Activated CD4-positive, alpha-beta memory T cell treated with anti-CD3 and anti-CD28 coated beads for 36 hours (primary cell): ENCODE measurements at regions of chr12 and their contacts with region 1.

Region 1: DNA sequence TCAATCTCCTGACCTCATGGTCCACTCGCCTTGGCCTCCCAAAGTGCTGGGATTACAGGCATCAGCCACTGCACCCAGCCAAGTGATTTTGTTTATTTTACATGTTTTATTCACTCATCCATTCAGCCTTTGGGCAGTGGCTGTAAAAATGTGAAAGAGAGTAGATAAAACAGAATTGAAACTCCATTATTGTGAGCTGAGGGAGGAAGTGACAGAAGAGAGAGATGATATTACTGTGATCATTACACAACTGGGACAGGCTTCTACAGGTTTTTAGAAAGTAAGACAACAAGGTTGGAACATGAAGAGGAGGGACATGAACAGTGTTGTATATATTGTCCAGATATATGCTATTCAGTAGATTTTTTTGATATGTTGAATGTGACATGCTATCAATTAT is 25.0 kb downstream of the CREBL2 start:
- DNase-seq: no peak
- H3K4me3 Mint-ChIP-seq: no peak overlapping the region
- H3K27ac Mint-ChIP-seq: no peak overlapping the region
- H3K4me1 Mint-ChIP-seq: peaks cover 16% of the 10 kb centered on the region
- H3K27me3 Mint-ChIP-seq: no peaks in the 10 kb centered on the region

Region 2: DNA sequence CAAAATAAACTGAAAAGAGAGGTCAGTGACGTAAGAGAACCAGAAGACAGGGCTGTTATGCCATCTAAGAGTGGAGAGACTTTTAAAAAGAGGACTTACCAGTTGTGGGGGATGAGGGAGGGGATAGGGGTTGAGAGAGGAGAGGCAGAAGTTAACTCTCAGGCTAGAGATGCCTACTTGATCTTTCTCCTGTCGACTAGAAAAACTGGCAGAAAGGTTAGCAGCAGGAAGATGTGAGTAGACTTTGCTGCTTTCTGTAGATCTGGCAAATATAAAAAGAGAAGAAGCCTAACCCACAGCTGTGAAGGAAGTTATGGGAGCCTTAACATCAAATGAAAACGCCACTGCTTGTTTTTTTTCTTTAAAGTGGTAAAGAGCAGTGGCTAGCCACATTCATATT is 14.2 kb before region 1 on chr12:
- CTCF ChIA-PET with region 1: interaction called, 3 read pairs
- POLR2A ChIA-PET with region 1: no interaction called
- intact Hi-C with region 1: loop called (anchors 1 kb)
- DNase-seq: no peak
- H3K4me3 Mint-ChIP-seq: peak overlapping the region; percentile 20
- H3K27ac Mint-ChIP-seq: peak overlapping the region; percentile 85
- H3K4me1 Mint-ChIP-seq: peaks cover 79% of the 10 kb centered on the region
- H3K27me3 Mint-ChIP-seq: no peaks in the 10 kb centered on the region